Activated CD4-positive, alpha-beta T cell treated with anti-CD3 and anti-CD28 coated beads for 36 hours (primary cell): ENCODE measurements at regions of chr2 and their contacts with region 1.

Region 1: DNA sequence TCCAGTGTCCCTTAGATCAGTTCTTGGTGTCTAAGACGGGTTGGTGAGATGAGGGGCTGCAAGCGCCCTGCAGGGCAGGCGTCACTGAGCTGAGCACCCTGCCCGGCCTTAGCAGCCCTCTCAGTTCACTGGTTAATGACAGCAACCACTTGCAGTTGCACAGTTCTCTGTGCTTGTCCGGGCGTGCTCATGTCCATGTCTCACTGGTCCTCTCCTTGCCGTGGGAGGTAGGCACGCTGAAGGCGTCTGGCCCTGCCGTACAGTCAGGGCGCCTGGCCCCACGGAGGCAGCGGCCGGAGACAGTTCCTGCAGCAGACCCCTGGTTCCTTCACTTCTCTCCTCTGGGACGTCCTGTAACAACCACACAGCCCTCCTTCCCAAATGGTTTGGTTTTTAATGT is 75.3 kb downstream of the ARHGEF4 start:
- DNase-seq: no peak
- ATAC-seq: no peak
- H3K4me3 Mint-ChIP-seq: no peak overlapping the region
- H3K27ac Mint-ChIP-seq: no peak overlapping the region
- H3K4me1 Mint-ChIP-seq: no peaks in the 10 kb centered on the region
- H3K27me3 Mint-ChIP-seq: peaks cover 20% of the 10 kb centered on the region

Region 2: DNA sequence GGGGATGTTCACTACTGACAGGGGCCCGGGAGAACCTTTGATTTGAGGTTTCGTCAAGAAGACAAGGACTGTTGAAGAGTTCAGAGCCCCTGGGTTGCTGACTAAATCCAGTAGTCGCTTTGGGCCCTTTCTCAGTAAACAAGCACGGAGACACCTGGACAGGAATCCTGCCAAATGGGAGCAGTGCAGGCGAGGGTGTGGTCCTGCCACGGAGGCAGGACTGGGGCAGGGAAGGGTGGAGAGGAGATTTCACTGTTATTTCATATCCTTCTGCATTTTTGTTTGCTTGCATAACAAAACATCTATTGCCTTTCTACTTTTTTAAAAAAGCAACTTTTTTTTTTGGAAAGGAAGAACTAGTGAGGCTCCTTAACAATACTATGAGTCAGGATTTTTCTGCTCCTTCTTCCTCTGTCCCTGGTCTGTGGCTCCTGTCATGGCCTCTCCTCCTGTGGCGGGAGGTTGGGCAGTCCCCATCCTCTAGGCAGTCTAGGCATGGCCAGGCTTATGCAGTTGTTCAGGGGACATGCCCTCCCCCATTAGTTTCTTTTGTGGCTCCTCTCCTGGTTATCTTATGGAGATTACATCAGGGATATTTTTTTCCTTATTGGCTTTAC is 17.6 kb before region 1 on chr2:
- CTCF ChIA-PET with region 1: no interaction called
- POLR2A ChIA-PET with region 1: no interaction called
- intact Hi-C with region 1: no loop called
- DNase-seq: no peak
- ATAC-seq: no peak
- H3K4me3 Mint-ChIP-seq: no peak overlapping the region
- H3K27ac Mint-ChIP-seq: no peak overlapping the region
- H3K4me1 Mint-ChIP-seq: no peaks in the 10 kb centered on the region
- H3K27me3 Mint-ChIP-seq: peaks cover 11% of the 10 kb centered on the region

Region 3: GRCh38 chr2:130936451-130936850 is 24.5 kb after region 1 on chr2:
- CTCF ChIA-PET with region 1: no interaction called
- POLR2A ChIA-PET with region 1: interaction called, 10 read pairs
- intact Hi-C with region 1: no loop called
- DNase-seq: no peak
- ATAC-seq: no peak
- H3K4me3 Mint-ChIP-seq: no peak overlapping the region
- H3K27ac Mint-ChIP-seq: no peak overlapping the region
- H3K4me1 Mint-ChIP-seq: no peaks in the 10 kb centered on the region
- H3K27me3 Mint-ChIP-seq: peaks cover 5% of the 10 kb centered on the region

Region 4: GRCh38 chr2:130963849-130964793 is 52.1 kb after region 1 on chr2:
- CTCF ChIA-PET with region 1: no interaction called
- POLR2A ChIA-PET with region 1: no interaction called
- intact Hi-C with region 1: loop called in 1 of 2 experiments (anchors 2 kb)
- DNase-seq: peak; percentile 47
- ATAC-seq: peak; percentile 30
- H3K4me3 Mint-ChIP-seq: peak overlapping the region; percentile 42
- H3K27ac Mint-ChIP-seq: no peak overlapping the region
- H3K4me1 Mint-ChIP-seq: peaks cover 6% of the 10 kb centered on the region
- H3K27me3 Mint-ChIP-seq: peaks cover 40% of the 10 kb centered on the region